Adrenal gland (tissue), 19 donors: ENCODE measurements at regions of chr16 and their contacts with region 1.

Region 1: DNA sequence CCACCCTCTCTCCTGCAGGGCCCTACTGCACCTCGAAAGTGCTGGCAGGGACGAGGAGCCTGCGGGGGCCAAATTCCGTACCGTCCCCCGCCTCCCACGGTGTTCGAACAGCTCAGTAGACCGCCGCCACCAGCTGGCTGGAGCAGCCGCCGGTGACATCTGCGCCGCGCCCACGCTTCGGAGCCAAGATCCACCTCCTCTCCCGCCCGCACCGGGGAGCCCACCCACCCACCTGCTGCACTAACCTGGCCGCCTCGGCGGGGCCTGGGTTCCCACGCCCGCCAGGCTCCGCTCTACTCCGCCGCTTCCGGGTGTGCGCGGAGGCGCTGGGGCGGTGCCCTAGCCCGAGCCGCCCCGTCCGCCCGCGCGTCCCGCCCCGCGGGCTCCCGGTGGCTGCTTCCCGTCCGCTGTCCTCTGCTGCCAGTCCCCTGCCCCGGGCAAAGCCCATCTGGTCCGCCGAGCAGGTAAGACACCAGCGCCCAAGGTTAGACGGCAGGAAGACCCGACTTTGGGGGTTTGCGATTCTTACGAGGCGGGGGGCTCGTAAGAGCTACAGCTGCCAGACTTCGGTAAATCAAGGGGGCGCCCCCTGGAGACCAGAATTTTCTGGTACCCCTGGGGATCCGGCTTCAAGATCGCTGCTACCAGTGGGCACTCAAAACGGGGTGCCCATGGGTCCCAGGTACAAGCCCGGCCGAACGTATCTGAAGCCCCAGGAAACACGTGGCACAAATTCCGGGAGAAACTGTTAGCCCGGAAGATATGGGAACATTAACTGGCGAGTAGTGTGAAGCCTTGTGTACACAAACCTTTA is at the starts of genes FBXL8 and TRADD:
- DNase-seq: peak in 6 of 7 donors; percentile 69 to 80 (median 77)
- H3K4me3 ChIP-seq: peak within 1 kb of the TSS; percentile 55 to 97 (median 74)
- H3K27ac ChIP-seq: peak within 1 kb of the TSS; percentile 55 to 81 (median 69)
- H3K4me1 ChIP-seq: peaks cover 38 to 56% of the 10 kb centered on the region in 2 donors
- H3K27me3 ChIP-seq: no peaks in the 10 kb centered on the region
- CTCF ChIP-seq: peak in 5 of 6 experiments; percentile 12 to 48 (median 24)
- POLR2A ChIP-seq: peak; percentile 51 to 62
- total RNA-seq, gene FBXL8: 3.6 to 58.3 (median 37.1) TPM
- total RNA-seq, gene TRADD: 14.4 to 62.7 (median 33.8) TPM

Region 2: GRCh38 chr16:66977341-66978113 is 182.3 kb before region 1 on chr16:
- intact Hi-C with region 1: loop called in 1 of 2 experiments (anchors 5 kb)
- DNase-seq: peak; percentile 90 to 97 (median 95)
- H3K4me3 ChIP-seq: no peak overlapping the region
- H3K27ac ChIP-seq: no peak overlapping the region
- H3K4me1 ChIP-seq: no peaks in the 10 kb centered on the region
- H3K27me3 ChIP-seq: no peaks in the 10 kb centered on the region
- CTCF ChIP-seq: peak; percentile 95 to 99 (median 98)
- POLR2A ChIP-seq: no peak

Region 3: GRCh38 chr16:67017810-67018488 is 141.9 kb before region 1 on chr16:
- intact Hi-C with region 1: loop called (anchors 5 to 10 kb)
- DNase-seq: peak; percentile 77 to 91 (median 87)
- H3K4me3 ChIP-seq: no peak overlapping the region
- H3K27ac ChIP-seq: no peak overlapping the region
- H3K4me1 ChIP-seq: peaks cover 13% of the 10 kb centered on the region in 2 donors
- H3K27me3 ChIP-seq: no peaks in the 10 kb centered on the region
- CTCF ChIP-seq: peak; percentile 40 to 81 (median 75)
- POLR2A ChIP-seq: no peak

Region 4: DNA sequence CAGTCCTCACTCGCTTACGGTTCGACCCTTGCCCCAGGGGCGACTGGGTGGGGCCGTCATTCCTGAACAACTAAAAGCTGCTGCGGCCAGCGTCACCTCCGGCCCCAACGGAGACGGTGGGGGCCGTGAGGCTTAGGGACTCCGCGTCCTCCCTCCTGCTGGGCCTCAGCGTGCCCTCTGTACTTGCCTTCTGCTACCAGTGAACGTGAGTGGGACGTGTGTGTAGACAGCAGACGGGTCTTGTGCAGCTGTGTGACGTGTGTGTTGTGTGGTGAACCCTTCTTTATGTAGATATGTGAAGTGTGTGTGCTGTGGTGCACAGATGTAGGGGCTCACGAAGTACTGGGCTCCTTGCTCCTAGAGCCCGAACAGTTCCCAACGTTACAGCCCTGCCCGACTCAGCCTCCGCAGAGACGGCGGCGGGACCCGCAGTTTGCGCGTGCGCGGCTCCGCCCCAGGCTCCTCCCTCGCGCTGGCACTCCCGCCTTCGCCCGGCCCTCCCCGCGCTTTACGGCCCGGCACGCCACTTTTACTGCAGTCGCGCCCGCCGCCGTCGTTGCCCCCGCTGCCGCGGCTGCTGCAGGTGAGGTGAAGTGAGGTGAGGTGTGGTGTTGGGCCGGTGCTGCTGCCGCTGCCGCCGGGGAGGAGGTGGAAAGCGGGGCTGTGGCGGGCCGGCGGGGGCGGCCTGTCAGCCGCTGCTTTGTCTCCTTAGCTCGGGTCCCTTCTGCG is 50.2 kb before region 1 on chr16 and contains the start of gene PHAF1:
- intact Hi-C with region 1: loop called in 1 of 2 experiments (anchors 5 kb)
- DNase-seq: peak; percentile 91 to 95 (median 92)
- H3K4me3 ChIP-seq: peak within 1 kb of the TSS; percentile 68 to 89 (median 84)
- H3K27ac ChIP-seq: peak within 1 kb of the TSS; percentile 46 to 88 (median 76)
- H3K4me1 ChIP-seq: peaks cover 16 to 26% of the 10 kb centered on the region in 2 donors
- H3K27me3 ChIP-seq: no peaks in the 10 kb centered on the region
- CTCF ChIP-seq: no peak
- POLR2A ChIP-seq: peak in 1 of 2 donors; percentile 79
- total RNA-seq, gene PHAF1: 12.6 to 27.4 (median 14.5) TPM